ENCODE measurements at regions of chr4 and their contacts with region 1.

Region 1: DNA sequence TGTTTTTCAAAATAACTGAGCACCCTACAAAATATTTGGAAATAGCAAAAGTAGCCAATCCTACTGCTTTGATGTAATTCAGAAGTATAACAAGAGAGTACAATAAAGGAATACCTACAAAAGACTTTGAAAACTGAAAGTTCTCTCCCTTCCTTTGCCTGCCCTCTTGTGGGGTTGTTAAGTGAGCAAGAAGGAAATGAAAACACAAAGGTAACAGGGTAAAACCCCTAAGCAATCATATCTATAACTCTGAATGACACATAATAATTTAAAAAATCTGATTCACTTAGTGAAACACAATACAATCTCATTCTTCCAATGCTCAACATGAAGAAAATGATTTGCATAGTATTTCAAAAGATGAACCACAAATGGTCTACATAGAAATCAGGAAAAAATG is 98.2 kb downstream of the FRYL start:
- DNase-seq: peak; percentile 51
- H3K4me3 Mint-ChIP-seq: no peak overlapping the region
- H3K27ac Mint-ChIP-seq: peak overlapping the region; percentile 63
- H3K4me1 Mint-ChIP-seq: peaks cover 38% of the 10 kb centered on the region
- H3K27me3 Mint-ChIP-seq: no peaks in the 10 kb centered on the region

Region 2: DNA sequence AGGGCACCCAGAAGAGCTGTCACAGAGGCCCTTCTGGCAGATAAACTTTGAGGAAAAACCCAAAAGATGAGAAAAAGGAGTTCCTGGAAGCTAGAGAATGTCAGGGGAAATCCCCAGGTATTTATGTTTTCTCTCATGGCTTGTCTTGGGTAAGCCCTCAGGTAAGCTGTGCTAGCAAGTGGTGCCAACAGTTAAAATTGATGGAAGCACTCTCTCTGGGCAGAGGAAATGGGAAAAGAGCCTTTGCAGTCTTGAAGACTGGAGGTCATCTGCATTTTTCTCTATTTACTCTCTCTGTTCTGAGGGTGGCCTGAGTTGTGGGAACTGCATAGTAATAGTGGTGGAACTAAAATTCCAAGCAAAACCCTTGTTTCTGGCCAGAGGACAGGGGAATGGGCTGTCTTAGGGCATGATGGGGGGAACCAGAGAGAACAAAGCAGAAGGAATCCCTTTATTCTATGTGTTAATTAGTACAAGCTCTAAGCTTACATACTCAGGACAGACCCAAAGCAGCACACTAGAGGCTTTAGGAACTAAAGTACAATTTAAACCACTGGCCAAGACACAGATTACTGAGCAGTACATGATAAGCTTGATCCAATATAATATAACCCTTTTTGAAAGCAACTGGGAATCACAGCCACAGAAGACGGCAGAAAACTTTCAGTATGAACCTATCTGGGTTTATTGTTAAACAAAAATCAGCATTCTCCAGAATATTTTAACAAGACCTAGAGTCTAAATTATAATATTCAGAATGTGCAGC is 252.0 kb before region 1 on chr4:
- CTCF ChIA-PET with region 1: no interaction called
- intact Hi-C with region 1: loop called (anchors 5 kb)
- DNase-seq: peak; percentile 16
- H3K4me3 Mint-ChIP-seq: no peak overlapping the region
- H3K27ac Mint-ChIP-seq: no peak overlapping the region
- H3K4me1 Mint-ChIP-seq: peaks cover 49% of the 10 kb centered on the region
- H3K27me3 Mint-ChIP-seq: no peaks in the 10 kb centered on the region

Region 3: DNA sequence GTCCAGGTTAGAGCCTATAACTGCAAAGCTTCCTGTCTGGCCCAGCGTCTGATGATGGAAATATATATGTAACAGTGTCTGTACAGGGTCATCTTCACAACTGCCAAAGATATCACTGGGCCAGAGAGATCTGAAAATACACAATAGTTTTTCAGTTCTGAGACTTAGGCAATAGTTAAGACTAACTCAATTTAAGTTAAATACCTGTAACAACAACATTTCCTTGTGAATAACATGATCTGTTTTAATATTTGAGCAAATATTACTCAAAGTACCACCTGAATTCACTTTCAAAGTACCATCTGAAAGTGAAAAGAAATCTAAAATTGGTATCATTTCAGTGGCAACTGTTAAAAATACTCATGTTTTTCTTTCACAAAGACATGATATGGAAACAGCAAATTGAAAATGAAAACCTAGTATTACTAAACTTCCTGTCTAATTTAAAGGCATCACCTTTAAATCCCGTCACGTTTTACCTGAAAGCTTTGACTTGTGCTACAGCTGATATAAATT is 182.2 kb before region 1 on chr4:
- CTCF ChIA-PET with region 1: no interaction called
- intact Hi-C with region 1: loop called (anchors 1 kb)
- DNase-seq: no peak
- H3K4me3 Mint-ChIP-seq: no peak overlapping the region
- H3K27ac Mint-ChIP-seq: no peak overlapping the region
- H3K4me1 Mint-ChIP-seq: peaks cover 16% of the 10 kb centered on the region
- H3K27me3 Mint-ChIP-seq: no peaks in the 10 kb centered on the region

Region 4: DNA sequence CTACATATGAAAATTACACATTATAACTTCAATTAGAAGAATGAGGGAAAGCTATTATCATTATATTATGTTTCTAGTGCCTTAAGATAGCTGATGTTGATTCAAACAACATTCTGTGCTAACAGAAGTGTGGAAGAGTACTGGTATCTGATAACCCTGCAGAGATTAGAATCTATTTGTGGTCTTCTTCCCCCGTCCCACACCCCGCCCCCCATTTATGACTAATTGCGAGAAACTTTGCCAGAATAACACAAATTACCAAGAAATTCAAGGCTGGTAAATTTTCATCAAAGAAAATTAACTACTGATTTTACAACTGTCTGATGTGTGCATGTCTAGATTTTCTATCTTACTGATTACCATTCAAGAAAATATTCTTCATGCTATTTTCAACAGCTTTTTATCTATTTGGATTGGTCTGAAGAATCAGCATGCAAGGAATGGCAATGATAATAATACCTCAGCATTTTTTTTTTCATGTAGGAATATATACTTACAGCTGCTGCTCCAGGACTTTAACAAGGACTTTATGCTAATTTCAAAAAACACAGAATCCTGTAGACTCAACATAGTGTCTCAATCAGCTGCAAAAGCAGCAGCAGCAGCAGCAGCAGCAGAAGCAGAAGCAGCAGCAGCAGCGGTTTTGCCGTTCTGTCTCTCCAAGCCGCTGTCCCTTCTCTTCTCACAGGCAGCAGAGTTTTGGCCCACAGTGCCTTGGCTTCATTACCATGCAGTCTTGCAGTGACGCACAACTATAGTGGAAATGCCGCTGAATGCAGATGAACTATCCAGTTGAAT is 28.4 kb before region 1 on chr4:
- CTCF ChIA-PET with region 1: no interaction called
- intact Hi-C with region 1: no loop called
- DNase-seq: peak; percentile 36
- H3K4me3 Mint-ChIP-seq: no peak overlapping the region
- H3K27ac Mint-ChIP-seq: no peak overlapping the region
- H3K4me1 Mint-ChIP-seq: peaks cover 39% of the 10 kb centered on the region
- H3K27me3 Mint-ChIP-seq: no peaks in the 10 kb centered on the region

Region 5: GRCh38 chr4:48665555-48666186 is 16.2 kb before region 1 on chr4:
- CTCF ChIA-PET with region 1: no interaction called
- intact Hi-C with region 1: loop called (anchors 2 kb)
- DNase-seq: no peak
- H3K4me3 Mint-ChIP-seq: no peak overlapping the region
- H3K27ac Mint-ChIP-seq: no peak overlapping the region
- H3K4me1 Mint-ChIP-seq: peaks cover 27% of the 10 kb centered on the region
- H3K27me3 Mint-ChIP-seq: no peaks in the 10 kb centered on the region

Region 6: GRCh38 chr4:48830706-48831531 is 149.1 kb after region 1 on chr4 and contains the start of gene OCIAD1:
- CTCF ChIA-PET with region 1: no interaction called
- intact Hi-C with region 1: loop called (anchors 1 kb)
- DNase-seq: peak; percentile 96
- H3K4me3 Mint-ChIP-seq: peak within 1 kb of the TSS; percentile 100
- H3K27ac Mint-ChIP-seq: peak within 1 kb of the TSS; percentile 100
- H3K4me1 Mint-ChIP-seq: peaks cover 23% of the 10 kb centered on the region
- H3K27me3 Mint-ChIP-seq: peaks cover 6% of the 10 kb centered on the region
- total RNA-seq, gene OCIAD1: 91.9 to 99.0 TPM

Region 7: GRCh38 chr4:48896845-48897244 is 215.0 kb after region 1 on chr4:
- CTCF ChIA-PET with region 1: no interaction called
- intact Hi-C with region 1: no loop called
- DNase-seq: no peak
- H3K4me3 Mint-ChIP-seq: no peak overlapping the region
- H3K27ac Mint-ChIP-seq: no peak overlapping the region
- H3K4me1 Mint-ChIP-seq: peaks cover 26% of the 10 kb centered on the region
- H3K27me3 Mint-ChIP-seq: no peaks in the 10 kb centered on the region